ENCODE measurements at regions of chr5 and their contacts with region 1.

Region 1: DNA sequence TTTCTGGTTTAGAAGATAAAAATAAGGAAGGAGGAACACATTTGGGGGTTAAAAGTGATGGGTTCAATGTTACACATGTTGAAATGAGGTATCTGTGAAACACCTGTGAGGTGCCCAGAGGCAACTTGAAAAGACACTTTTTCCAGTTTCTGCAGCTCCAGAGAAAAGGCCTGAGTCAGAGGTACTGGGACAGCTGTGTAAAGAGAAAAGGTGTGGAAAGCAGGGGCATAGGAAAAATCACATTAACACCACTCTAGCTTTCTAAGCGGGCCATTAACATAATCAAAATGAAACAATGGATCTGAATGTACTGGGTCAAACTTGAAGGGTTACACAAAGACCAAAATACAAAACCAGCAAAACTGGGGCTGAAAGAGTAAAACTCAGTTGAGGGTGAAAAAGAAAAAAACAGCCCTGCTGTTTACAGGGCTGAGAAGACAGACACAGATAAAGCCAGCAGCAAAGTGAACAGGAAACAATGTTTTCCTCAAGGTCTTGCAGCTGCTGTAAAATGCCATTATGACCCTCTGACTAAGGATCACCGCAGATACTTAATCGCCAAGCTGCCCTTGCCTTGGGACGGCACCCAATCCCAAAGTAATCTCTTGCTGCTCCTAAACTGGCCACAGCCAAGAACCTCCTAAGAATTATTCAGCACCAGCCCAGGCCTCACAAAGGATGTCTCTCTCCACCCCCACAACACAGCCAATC is 104.7 kb downstream of the DROSHA start:
- DNase-seq: no peak
- CTCF ChIP-seq: no peak

Region 2: DNA sequence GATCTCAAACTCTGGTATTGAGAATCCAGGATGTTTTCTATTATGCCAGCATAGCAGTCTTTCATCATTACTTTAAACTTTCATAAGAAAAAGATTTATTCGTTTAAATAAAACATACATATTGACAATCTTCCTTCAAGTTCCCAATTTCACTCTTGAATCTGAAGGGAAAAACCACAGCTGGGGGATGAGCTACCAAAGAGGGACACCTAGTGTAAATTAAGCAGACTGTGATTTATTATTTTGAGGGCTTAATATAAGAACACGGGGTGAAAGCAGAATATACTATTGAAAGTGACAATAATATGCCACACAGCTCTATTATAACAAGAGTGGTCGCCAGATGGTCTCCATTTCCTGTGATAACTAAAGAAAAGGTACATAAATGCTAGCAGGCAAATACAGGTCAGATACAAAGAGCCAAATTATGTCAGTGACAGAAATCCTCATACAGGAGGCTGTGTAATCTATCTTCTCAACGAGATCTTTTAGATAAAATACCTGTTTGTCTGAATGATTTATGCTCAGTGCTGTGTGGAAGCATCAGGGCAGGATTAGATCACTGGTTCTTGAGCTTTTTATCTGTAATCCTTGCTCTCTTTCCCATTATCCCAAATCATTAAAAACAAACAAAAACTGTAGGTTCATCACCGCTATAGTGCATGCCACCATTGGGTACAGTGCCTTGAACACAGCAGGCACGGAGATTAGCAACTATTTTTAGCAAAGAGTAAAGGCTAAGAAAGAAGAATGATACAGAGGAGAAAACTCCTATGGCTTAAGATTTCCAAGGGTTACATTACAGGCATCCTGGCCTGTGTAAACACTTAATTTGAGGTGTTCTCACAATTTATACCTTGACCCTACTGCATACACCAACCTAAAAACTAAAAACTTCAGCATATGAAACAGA is 11.9 kb before region 1 on chr5:
- CTCF ChIA-PET with region 1: interaction called, 10 read pairs
- POLR2A ChIA-PET with region 1: no interaction called
- DNase-seq: no peak
- CTCF ChIP-seq: no peak

Region 3: GRCh38 chr5:32170303-32171151 is 743.4 kb after region 1 on chr5:
- CTCF ChIA-PET with region 1: no interaction called
- POLR2A ChIA-PET with region 1: no interaction called
- DNase-seq: no peak
- CTCF ChIP-seq: no peak

Measured in GM10248 (cell line).